B cell (primary cell): ENCODE measurements at regions of chr2 and their contacts with region 1.

Region 1: GRCh38 chr2:174341286-174341994 is 6.7 kb downstream of the SP9 start:
- DNase-seq: peak; percentile 91
- ATAC-seq: peak; percentile 74
- H3K4me3 ChIP-seq: peak overlapping the region in 1 of 5 experiments; percentile 31
- H3K4me3 Mint-ChIP-seq: peak overlapping the region; percentile 82
- H3K27ac ChIP-seq: no peak overlapping the region
- H3K27ac Mint-ChIP-seq: peak overlapping the region; percentile 88
- H3K4me1 ChIP-seq: peaks cover 54 to 71% of the 10 kb centered on the region in 2 donors
- H3K4me1 Mint-ChIP-seq: peaks cover 37% of the 10 kb centered on the region
- H3K27me3 ChIP-seq: peaks cover 1 to 81% (median 71%) of the 10 kb centered on the region in 4 experiments
- H3K27me3 Mint-ChIP-seq: peaks cover 56% of the 10 kb centered on the region
- CTCF ChIP-seq: peak; percentile 99

Region 2: GRCh38 chr2:172806493-172806892 is 1534.9 kb before region 1 on chr2:
- CTCF ChIA-PET with region 1: no interaction called
- POLR2A ChIA-PET with region 1: no interaction called
- intact Hi-C with region 1: loop called (anchors 5 kb)
- DNase-seq: peak; percentile 17
- ATAC-seq: no peak
- H3K4me3 ChIP-seq: no peak overlapping the region
- H3K4me3 Mint-ChIP-seq: no peak overlapping the region
- H3K27ac ChIP-seq: no peak overlapping the region
- H3K27ac Mint-ChIP-seq: no peak overlapping the region
- H3K4me1 ChIP-seq: no peaks in the 10 kb centered on the region
- H3K4me1 Mint-ChIP-seq: no peaks in the 10 kb centered on the region
- H3K27me3 ChIP-seq: peaks cover 0 to 4% (median 1%) of the 10 kb centered on the region in 4 experiments
- H3K27me3 Mint-ChIP-seq: peaks cover 2% of the 10 kb centered on the region
- CTCF ChIP-seq: peak; percentile 84

Region 3: DNA sequence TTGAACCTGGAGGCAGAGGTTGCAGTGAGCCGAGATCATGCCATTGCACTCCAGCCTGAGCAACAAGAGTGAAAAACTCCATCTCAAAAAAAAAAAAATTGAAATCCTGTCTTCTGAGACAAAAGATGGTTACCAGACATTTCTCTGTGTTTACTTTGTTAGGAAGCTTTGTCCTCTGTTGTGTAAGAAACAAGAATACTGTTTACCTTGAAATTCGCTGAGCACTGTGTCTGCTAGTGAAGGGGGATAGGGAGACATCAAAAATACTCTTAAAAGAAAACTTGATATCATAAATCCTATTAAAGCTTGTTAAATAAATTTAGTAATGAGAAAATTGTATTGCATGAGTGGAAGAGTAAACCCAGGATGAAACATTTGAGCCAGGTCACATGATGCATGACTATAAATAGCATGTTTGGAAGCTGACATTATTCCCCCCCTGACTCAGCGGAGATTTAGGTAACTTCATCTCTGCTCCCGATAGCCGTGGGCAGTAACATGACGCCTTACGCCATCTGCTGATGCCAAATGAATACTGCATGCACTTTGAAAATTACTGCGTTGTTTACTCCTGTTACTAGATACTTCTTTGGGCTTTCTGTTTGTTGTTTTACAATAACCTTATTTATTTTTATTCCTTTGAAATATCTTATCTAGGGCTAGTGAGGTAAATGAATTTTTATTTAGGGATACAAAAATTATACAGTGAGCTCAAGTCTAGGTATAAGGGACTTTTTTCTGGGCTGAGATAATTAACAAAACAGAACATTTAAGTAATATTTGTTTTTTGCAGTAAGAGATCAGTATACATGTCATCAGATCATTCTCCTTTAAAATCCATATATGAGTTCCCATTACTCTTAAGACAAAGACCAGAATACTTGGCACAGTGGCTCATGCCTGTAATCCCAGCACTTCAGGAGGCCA is 1130.9 kb before region 1 on chr2:
- CTCF ChIA-PET with region 1: no interaction called
- POLR2A ChIA-PET with region 1: no interaction called
- intact Hi-C with region 1: loop called (anchors 2 kb)
- DNase-seq: peak; percentile 73
- ATAC-seq: peak; percentile 76
- H3K4me3 ChIP-seq: no peak overlapping the region
- H3K4me3 Mint-ChIP-seq: no peak overlapping the region
- H3K27ac ChIP-seq: no peak overlapping the region
- H3K27ac Mint-ChIP-seq: no peak overlapping the region
- H3K4me1 ChIP-seq: no peaks in the 10 kb centered on the region
- H3K4me1 Mint-ChIP-seq: no peaks in the 10 kb centered on the region
- H3K27me3 ChIP-seq: no peaks in the 10 kb centered on the region
- H3K27me3 Mint-ChIP-seq: no peaks in the 10 kb centered on the region
- CTCF ChIP-seq: peak; percentile 89

Region 4: DNA sequence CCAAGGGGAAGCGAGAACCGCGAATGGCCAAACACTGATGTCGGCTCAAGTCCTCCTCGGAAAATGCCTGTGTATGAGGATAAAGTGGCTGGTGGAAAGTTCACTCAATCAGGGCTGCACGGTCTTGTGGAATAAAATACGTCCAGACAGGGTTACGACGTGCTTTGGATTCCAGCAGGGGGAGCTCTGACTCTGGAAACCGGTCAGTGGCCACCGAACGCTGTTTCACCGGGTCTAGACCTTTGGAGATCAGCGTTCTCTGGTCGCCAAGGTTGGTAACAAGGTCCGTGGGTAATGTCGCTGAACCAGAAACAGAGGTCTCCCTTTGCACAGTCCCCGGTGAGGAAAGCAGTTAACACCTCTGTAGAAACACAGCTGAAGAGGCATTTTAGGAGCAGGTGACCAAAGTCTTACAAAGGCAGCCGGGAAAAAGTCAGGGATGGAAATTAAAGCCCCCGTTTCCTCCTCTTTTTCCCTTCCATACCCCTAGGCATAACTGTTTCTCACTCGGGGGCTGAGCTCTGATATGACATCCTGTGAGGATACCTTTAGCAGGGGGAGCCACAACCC is 939.0 kb before region 1 on chr2:
- CTCF ChIA-PET with region 1: interaction called, 151 read pairs
- POLR2A ChIA-PET with region 1: no interaction called
- intact Hi-C with region 1: loop called (anchors 1 kb)
- DNase-seq: peak; percentile 80
- ATAC-seq: peak; percentile 88
- H3K4me3 ChIP-seq: no peak overlapping the region
- H3K4me3 Mint-ChIP-seq: no peak overlapping the region
- H3K27ac ChIP-seq: no peak overlapping the region
- H3K27ac Mint-ChIP-seq: no peak overlapping the region
- H3K4me1 ChIP-seq: peaks cover 6 to 8% of the 10 kb centered on the region in 2 donors
- H3K4me1 Mint-ChIP-seq: peaks cover 4% of the 10 kb centered on the region
- H3K27me3 ChIP-seq: peaks cover 0 to 40% (median 35%) of the 10 kb centered on the region in 4 experiments
- H3K27me3 Mint-ChIP-seq: peaks cover 58% of the 10 kb centered on the region
- CTCF ChIP-seq: peak; percentile 84

Region 5: DNA sequence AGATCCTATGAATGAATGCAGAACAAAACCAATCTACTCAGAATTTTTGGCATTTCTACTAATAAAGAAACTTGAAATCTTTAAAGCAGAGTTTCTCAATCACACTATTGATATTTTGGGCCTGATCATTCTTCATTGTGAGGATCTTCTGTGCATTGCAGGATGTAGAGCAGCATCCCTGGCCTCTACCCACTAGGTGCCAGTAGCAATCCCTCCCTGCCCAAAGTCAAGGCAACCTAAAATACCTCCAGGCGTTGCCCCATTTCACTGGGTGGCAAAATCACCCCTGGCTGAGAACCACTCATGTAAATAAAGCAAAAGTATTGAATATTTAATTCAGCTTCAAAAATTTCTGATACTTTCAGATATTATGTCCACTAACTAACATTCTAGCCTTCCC is 589.3 kb before region 1 on chr2:
- CTCF ChIA-PET with region 1: no interaction called
- POLR2A ChIA-PET with region 1: no interaction called
- intact Hi-C with region 1: loop called (anchors 10 kb)
- DNase-seq: peak; percentile 10
- ATAC-seq: no peak
- H3K4me3 ChIP-seq: no peak overlapping the region
- H3K4me3 Mint-ChIP-seq: no peak overlapping the region
- H3K27ac ChIP-seq: no peak overlapping the region
- H3K27ac Mint-ChIP-seq: no peak overlapping the region
- H3K4me1 ChIP-seq: no peaks in the 10 kb centered on the region
- H3K4me1 Mint-ChIP-seq: no peaks in the 10 kb centered on the region
- H3K27me3 ChIP-seq: peaks cover 0 to 6% (median 2%) of the 10 kb centered on the region in 4 experiments
- H3K27me3 Mint-ChIP-seq: peaks cover 17% of the 10 kb centered on the region
- CTCF ChIP-seq: no peak

Region 6: GRCh38 chr2:174078275-174078674 is 263.2 kb before region 1 on chr2:
- CTCF ChIA-PET with region 1: interaction called, 3 read pairs
- POLR2A ChIA-PET with region 1: no interaction called
- intact Hi-C with region 1: loop called (anchors 2 kb)
- DNase-seq: peak; percentile 22
- ATAC-seq: no peak
- H3K4me3 ChIP-seq: no peak overlapping the region
- H3K4me3 Mint-ChIP-seq: no peak overlapping the region
- H3K27ac ChIP-seq: no peak overlapping the region
- H3K27ac Mint-ChIP-seq: no peak overlapping the region
- H3K4me1 ChIP-seq: no peaks in the 10 kb centered on the region
- H3K4me1 Mint-ChIP-seq: no peaks in the 10 kb centered on the region
- H3K27me3 ChIP-seq: no peaks in the 10 kb centered on the region
- H3K27me3 Mint-ChIP-seq: no peaks in the 10 kb centered on the region
- CTCF ChIP-seq: peak; percentile 65

Region 7: GRCh38 chr2:174292908-174293307 is 48.5 kb before region 1 on chr2:
- CTCF ChIA-PET with region 1: no interaction called
- POLR2A ChIA-PET with region 1: no interaction called
- intact Hi-C with region 1: no loop called
- DNase-seq: no peak
- ATAC-seq: no peak
- H3K4me3 ChIP-seq: no peak overlapping the region
- H3K4me3 Mint-ChIP-seq: no peak overlapping the region
- H3K27ac ChIP-seq: no peak overlapping the region
- H3K27ac Mint-ChIP-seq: no peak overlapping the region
- H3K4me1 ChIP-seq: no peaks in the 10 kb centered on the region
- H3K4me1 Mint-ChIP-seq: no peaks in the 10 kb centered on the region
- H3K27me3 ChIP-seq: peaks cover 0 to 5% (median 0%) of the 10 kb centered on the region in 4 experiments
- H3K27me3 Mint-ChIP-seq: peaks cover 10% of the 10 kb centered on the region
- CTCF ChIP-seq: no peak

Region 8: GRCh38 chr2:174326161-174327020 is 15.0 kb before region 1 on chr2:
- CTCF ChIA-PET with region 1: interaction called, 19 read pairs
- POLR2A ChIA-PET with region 1: interaction called, 4 read pairs
- intact Hi-C with region 1: loop called (anchors 1 kb)
- DNase-seq: peak; percentile 62
- ATAC-seq: peak; percentile 45
- H3K4me3 ChIP-seq: peak overlapping the region; percentile 19 to 64 (median 54)
- H3K4me3 Mint-ChIP-seq: peak overlapping the region; percentile 87
- H3K27ac ChIP-seq: no peak overlapping the region
- H3K27ac Mint-ChIP-seq: peak overlapping the region; percentile 10
- H3K4me1 ChIP-seq: peaks cover 36 to 45% of the 10 kb centered on the region in 2 donors
- H3K4me1 Mint-ChIP-seq: peaks cover 32% of the 10 kb centered on the region
- H3K27me3 ChIP-seq: peaks cover 7 to 65% (median 54%) of the 10 kb centered on the region in 4 experiments
- H3K27me3 Mint-ChIP-seq: peaks cover 70% of the 10 kb centered on the region
- CTCF ChIP-seq: no peak